ENCODE measurements at regions of chr14 and their contacts with region 1.

Region 1: GRCh38 chr14:90697577-90698206 is 118.5 kb downstream of the TTC7B start:
- DNase-seq: peak; percentile 94
- H3K4me3 ChIP-seq: peak overlapping the region; percentile 21
- H3K27ac ChIP-seq: peak overlapping the region; percentile 94
- H3K4me1 ChIP-seq: peaks cover 54% of the 10 kb centered on the region
- H3K27me3 ChIP-seq: no peaks in the 10 kb centered on the region
- CTCF ChIP-seq: peak; percentile 93

Region 2: DNA sequence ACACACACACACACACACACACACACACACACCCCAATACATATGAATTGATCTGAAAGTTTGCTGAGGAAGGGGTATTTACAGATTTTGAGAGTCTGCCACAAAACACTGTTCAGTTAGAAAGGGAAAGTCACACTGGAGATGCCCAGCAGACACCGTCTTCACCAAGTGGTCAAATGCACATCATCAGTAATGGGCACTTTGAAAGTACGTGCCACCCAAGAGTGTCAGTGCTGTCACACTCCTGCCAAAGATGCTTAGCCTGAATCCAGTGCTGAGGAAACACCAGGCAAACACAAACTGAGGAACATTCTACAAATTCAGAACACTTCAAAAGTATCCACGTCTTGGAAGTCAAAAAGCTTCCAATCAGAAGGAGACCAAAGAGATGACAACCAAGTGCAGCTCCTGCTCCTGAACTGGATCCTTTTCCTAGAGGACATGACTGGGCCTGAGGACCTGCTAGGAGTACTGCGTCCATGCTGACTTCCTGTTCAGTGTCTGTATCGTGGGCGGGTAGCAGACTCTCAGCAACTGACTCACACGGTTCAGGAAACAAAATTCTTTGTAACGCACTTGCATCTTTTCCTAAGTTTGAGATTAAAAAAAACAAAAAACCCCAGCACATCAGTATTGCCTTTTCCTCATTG is 422.8 kb before region 1 on chr14:
- CTCF ChIA-PET with region 1: no interaction called
- POLR2A ChIA-PET with region 1: no interaction called
- intact Hi-C with region 1: loop called (anchors 10 kb)
- DNase-seq: peak; percentile 57
- H3K4me3 ChIP-seq: no peak overlapping the region
- H3K27ac ChIP-seq: peak overlapping the region; percentile 42
- H3K4me1 ChIP-seq: peaks cover 16% of the 10 kb centered on the region
- H3K27me3 ChIP-seq: no peaks in the 10 kb centered on the region
- CTCF ChIP-seq: no peak

Region 3: GRCh38 chr14:90301668-90302090 is 396.0 kb before region 1 on chr14:
- CTCF ChIA-PET with region 1: interaction called, 6 read pairs
- POLR2A ChIA-PET with region 1: no interaction called
- intact Hi-C with region 1: loop called (anchors 1 kb)
- DNase-seq: peak; percentile 71
- H3K4me3 ChIP-seq: no peak overlapping the region
- H3K27ac ChIP-seq: peak overlapping the region; percentile 27
- H3K4me1 ChIP-seq: peaks cover 23% of the 10 kb centered on the region
- H3K27me3 ChIP-seq: no peaks in the 10 kb centered on the region
- CTCF ChIP-seq: peak; percentile 71

Region 4: GRCh38 chr14:90399541-90400444 is 297.9 kb before region 1 on chr14:
- CTCF ChIA-PET with region 1: interaction called, 6 read pairs
- POLR2A ChIA-PET with region 1: interaction called, 7 read pairs
- intact Hi-C with region 1: loop called (anchors 1 kb)
- DNase-seq: peak; percentile 96
- H3K4me3 ChIP-seq: peak overlapping the region; percentile 90
- H3K27ac ChIP-seq: peak overlapping the region; percentile 63
- H3K4me1 ChIP-seq: peaks cover 61% of the 10 kb centered on the region
- H3K27me3 ChIP-seq: no peaks in the 10 kb centered on the region
- CTCF ChIP-seq: peak; percentile 100

Region 5: DNA sequence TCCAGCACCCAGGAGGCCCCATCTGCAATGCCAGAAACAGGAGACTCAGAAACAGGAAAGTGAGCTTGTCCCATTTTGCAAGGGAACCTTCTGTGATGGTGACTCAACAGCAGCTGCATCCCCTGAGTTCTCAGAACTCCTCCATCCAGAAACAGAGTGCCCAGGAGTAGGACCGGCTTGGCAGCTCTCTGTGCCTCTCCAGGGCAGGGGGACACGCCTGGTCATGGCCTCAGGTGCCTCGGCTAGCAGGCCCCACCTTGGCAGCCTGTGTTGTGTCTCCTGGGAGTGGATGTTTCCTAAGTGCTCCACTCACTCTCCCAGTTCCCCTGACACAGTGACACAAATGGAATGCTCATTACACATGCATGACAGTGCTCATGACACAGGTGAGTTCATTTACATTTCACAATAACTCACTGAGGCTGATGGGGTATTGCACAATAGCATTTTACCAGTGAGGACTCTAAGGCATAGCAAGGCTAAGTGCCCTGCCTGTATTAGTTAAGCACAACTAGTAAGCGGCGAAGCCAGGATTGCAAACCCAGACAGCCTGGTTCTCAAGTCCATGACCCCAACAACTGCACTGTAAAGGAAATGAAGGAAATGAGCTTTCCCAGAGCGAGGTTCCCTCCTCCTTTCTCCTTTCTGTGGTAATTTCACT is 253.5 kb before region 1 on chr14:
- CTCF ChIA-PET with region 1: no interaction called
- POLR2A ChIA-PET with region 1: no interaction called
- intact Hi-C with region 1: loop called (anchors 1 kb)
- DNase-seq: peak; percentile 93
- H3K4me3 ChIP-seq: no peak overlapping the region
- H3K27ac ChIP-seq: peak overlapping the region; percentile 98
- H3K4me1 ChIP-seq: peaks cover 48% of the 10 kb centered on the region
- H3K27me3 ChIP-seq: no peaks in the 10 kb centered on the region
- CTCF ChIP-seq: no peak

Region 6: DNA sequence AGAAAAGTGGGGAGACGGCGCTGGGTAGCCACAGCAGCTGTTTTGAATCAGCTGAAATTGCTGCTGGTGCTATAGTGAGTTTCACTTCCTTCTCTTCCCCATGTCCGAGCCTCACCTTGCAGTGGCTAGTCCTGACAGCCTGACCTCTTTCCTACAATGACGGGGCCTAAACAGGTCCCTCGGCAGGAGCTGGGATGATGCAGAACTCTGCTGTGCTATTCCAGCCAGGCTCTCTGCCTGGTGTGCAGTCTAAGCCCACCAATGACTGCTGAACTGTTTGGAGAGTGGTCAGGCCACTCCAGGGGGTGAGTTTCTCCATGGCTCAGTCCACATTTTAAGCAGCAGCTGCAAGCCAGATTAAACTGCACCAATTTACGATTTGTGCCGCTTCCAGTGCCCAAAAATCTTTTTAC is 88.8 kb before region 1 on chr14:
- CTCF ChIA-PET with region 1: no interaction called
- POLR2A ChIA-PET with region 1: no interaction called
- intact Hi-C with region 1: no loop called
- DNase-seq: no peak
- H3K4me3 ChIP-seq: no peak overlapping the region
- H3K27ac ChIP-seq: no peak overlapping the region
- H3K4me1 ChIP-seq: peaks cover 7% of the 10 kb centered on the region
- H3K27me3 ChIP-seq: no peaks in the 10 kb centered on the region
- CTCF ChIP-seq: no peak

Region 7: DNA sequence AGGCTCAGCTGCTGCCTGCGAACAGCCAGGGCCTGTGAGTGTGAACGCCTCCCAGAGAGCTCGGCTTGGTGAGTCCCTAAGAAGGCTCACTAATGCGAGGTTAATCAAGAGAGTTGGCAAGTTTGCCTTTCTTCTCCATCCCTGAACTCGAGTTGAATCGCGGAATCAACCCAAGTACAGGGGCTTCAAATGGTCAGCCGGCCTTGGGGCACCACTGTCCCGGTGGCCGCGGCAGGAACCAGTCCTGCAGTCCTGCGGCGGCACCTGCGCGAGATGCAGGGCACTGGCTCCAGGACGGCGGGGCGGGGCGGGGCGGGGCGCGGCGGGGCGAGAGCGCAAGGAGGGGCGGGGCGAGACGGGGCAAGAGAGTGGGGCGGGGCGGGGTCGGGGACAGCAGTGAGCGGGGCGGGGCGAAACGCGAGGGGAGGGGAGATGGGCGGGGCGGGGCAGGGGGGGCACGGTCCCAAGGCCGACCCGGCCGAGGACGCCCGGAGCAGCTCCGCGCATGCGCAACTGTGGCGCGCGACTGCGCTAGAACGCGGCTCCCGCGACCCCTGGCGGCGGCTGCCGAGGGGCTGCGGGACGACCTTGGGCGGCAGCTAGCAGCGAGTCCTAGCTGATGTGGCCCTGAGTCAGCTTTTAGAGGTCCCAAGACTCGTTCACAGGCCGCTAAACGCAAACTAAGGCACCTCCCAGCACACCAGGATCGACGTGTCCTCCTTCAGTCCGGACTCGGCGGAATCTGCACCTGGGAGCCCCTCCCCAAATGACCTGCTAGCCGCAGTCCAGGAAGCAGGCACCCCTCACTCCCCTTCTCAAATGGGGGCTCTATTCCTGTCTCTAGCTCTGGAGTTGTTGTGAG is 60.6 kb after region 1 on chr14:
- CTCF ChIA-PET with region 1: interaction called, 5 read pairs
- POLR2A ChIA-PET with region 1: no interaction called
- intact Hi-C with region 1: loop called (anchors 1 kb)
- DNase-seq: peak; percentile 93
- H3K4me3 ChIP-seq: peak overlapping the region; percentile 45
- H3K27ac ChIP-seq: peak overlapping the region; percentile 75
- H3K4me1 ChIP-seq: peaks cover 23% of the 10 kb centered on the region
- H3K27me3 ChIP-seq: no peaks in the 10 kb centered on the region
- CTCF ChIP-seq: peak; percentile 80

Region 8: DNA sequence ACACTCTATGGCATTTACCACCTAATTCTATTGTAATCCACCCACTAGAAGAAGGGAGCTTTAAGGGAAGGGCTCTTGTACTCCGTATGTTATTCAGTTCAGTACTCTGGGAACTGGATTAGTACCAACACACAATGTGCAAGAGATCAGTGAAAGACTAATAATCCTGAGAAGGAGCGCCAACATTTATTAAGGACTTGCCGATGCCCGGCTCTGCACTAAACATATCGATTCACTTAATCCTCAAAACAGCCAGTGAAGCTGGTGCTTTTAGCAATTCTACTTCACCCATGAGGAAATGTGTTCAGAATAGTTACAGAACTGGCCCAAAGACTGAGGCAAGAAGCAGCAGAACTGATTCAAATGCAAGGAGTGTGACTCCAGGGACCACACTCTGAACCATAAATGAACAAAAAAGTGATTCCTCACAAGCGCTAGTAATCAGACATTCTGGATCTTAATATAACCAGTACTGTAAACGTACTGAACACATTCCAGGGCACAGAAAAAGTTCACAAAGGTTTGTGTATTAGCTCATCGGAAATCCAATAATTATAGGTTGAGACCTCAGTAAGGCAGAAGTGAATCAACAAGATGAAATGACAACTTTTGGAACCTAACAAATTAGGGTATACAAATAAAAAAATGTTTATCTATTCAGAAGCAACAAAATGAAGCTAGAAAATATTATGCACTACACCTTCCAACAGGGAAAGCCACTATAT is 282.0 kb after region 1 on chr14:
- CTCF ChIA-PET with region 1: no interaction called
- POLR2A ChIA-PET with region 1: no interaction called
- intact Hi-C with region 1: no loop called
- DNase-seq: no peak
- H3K4me3 ChIP-seq: no peak overlapping the region
- H3K27ac ChIP-seq: no peak overlapping the region
- H3K4me1 ChIP-seq: no peaks in the 10 kb centered on the region
- H3K27me3 ChIP-seq: no peaks in the 10 kb centered on the region
- CTCF ChIP-seq: no peak

Measured in A673 (cell line).